ENCODE measurements at regions of chr19 and their contacts with region 1.

Region 1: DNA sequence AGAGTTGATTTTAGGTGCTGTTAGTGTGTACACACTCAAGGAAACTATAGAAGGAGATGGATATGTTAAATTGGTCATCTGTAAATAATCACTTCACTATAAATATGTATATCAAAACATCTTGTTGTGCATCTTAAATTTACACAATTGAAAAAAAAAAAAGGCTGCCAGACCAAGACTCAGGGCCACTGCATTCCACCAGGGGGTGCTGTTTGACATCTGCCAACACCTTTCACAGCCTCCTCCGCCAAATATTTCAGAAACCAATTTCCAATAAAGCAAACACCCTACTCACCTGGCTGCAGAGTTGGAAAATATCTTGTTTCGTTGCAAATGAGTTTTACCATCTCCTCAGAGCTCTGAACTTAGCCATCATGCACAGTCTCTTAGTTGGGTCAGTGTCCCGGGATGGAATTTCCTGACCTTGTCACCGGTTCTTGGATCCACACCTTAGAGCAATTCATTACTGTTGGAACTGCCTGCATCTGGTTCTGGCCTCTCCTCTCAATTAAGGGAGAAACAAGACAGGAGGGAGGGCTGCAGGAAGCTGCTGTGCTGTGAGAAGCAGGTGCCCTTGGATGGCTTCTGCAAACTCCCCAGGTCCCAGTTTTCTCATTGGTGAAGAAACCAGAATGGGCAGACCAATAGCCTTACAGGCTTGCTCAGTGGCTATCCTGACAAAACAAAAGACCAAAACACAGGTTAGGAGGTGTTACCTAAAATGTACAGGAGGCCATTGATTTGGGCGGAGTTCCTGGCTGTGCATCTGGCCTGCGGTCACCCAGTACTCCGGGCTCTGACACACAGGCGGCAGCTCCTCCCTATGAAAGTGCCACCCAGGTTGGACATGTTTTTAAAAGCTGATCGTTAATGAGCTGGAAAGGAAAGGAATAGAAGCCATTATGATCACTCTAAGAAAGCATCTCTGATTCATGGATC is 746.6 kb downstream of the UQCRFS1 start:
- DNase-seq: peak in 1 of 2 donors; percentile 88
- H3K4me3 ChIP-seq: no peak overlapping the region
- CTCF ChIP-seq: no peak
- POLR2A ChIP-seq: no peak

Region 2: GRCh38 chr19:28727480-28728159 is 261.2 kb after region 1 on chr19:
- intact Hi-C with region 1: loop called (anchors 10 kb)
- DNase-seq: no peak
- H3K4me3 ChIP-seq: no peak overlapping the region
- CTCF ChIP-seq: no peak
- POLR2A ChIP-seq: no peak

Measured in lower leg skin (tissue), 4 donors.